CD8-positive, alpha-beta T cell (primary cell): ENCODE measurements at regions of chr17 and their contacts with region 1.

Region 1: GRCh38 chr17:8916466-8916865 is 49.0 kb upstream of the PIK3R6 start:
- DNase-seq: no peak
- ATAC-seq: no peak
- H3K4me3 ChIP-seq: no peak overlapping the region
- H3K4me3 Mint-ChIP-seq: no peak overlapping the region
- H3K27ac ChIP-seq: peak overlapping the region in 1 of 2 experiments; percentile 59
- H3K27ac Mint-ChIP-seq: peak overlapping the region; percentile 84
- H3K4me1 ChIP-seq: peaks cover 16% of the 10 kb centered on the region
- H3K4me1 Mint-ChIP-seq: peaks cover 57% of the 10 kb centered on the region
- H3K27me3 ChIP-seq: no peaks in the 10 kb centered on the region
- H3K27me3 Mint-ChIP-seq: no peaks in the 10 kb centered on the region
- CTCF ChIP-seq: no peak

Region 2: GRCh38 chr17:7348478-7349242 is 1567.8 kb before region 1 on chr17:
- CTCF ChIA-PET with region 1: no interaction called
- POLR2A ChIA-PET with region 1: no interaction called
- intact Hi-C with region 1: no loop called
- DNase-seq: no peak
- ATAC-seq: no peak
- H3K4me3 ChIP-seq: no peak overlapping the region
- H3K4me3 Mint-ChIP-seq: no peak overlapping the region
- H3K27ac ChIP-seq: no peak overlapping the region
- H3K27ac Mint-ChIP-seq: peak overlapping the region; percentile 77
- H3K4me1 ChIP-seq: peaks cover 34% of the 10 kb centered on the region
- H3K4me1 Mint-ChIP-seq: peaks cover 38% of the 10 kb centered on the region
- H3K27me3 ChIP-seq: no peaks in the 10 kb centered on the region
- H3K27me3 Mint-ChIP-seq: no peaks in the 10 kb centered on the region
- CTCF ChIP-seq: no peak

Region 3: GRCh38 chr17:8935191-8935590 is 18.7 kb after region 1 on chr17:
- CTCF ChIA-PET with region 1: no interaction called
- POLR2A ChIA-PET with region 1: interaction called, 3 read pairs
- intact Hi-C with region 1: loop called in 1 of 2 experiments (anchors 2 kb)
- DNase-seq: peak in 5 of 9 experiments; percentile 52 to 92 (median 72)
- ATAC-seq: peak; percentile 64
- H3K4me3 ChIP-seq: no peak overlapping the region
- H3K4me3 Mint-ChIP-seq: peak overlapping the region; percentile 4
- H3K27ac ChIP-seq: peak overlapping the region in 1 of 2 experiments; percentile 81
- H3K27ac Mint-ChIP-seq: peak overlapping the region; percentile 88
- H3K4me1 ChIP-seq: peaks cover 42% of the 10 kb centered on the region
- H3K4me1 Mint-ChIP-seq: peaks cover 75% of the 10 kb centered on the region
- H3K27me3 ChIP-seq: no peaks in the 10 kb centered on the region
- H3K27me3 Mint-ChIP-seq: no peaks in the 10 kb centered on the region
- CTCF ChIP-seq: no peak

Region 4: GRCh38 chr17:8949061-8949661 is 32.7 kb after region 1 on chr17:
- CTCF ChIA-PET with region 1: no interaction called
- POLR2A ChIA-PET with region 1: no interaction called
- intact Hi-C with region 1: no loop called
- DNase-seq: peak in 2 of 9 experiments; percentile 17 to 39
- ATAC-seq: peak; percentile 16
- H3K4me3 ChIP-seq: no peak overlapping the region
- H3K4me3 Mint-ChIP-seq: peak overlapping the region; percentile 61
- H3K27ac ChIP-seq: peak overlapping the region in 1 of 2 experiments; percentile 63
- H3K27ac Mint-ChIP-seq: peak overlapping the region; percentile 88
- H3K4me1 ChIP-seq: peaks cover 87% of the 10 kb centered on the region
- H3K4me1 Mint-ChIP-seq: peaks cover 95% of the 10 kb centered on the region
- H3K27me3 ChIP-seq: no peaks in the 10 kb centered on the region
- H3K27me3 Mint-ChIP-seq: no peaks in the 10 kb centered on the region
- CTCF ChIP-seq: no peak

Region 5: DNA sequence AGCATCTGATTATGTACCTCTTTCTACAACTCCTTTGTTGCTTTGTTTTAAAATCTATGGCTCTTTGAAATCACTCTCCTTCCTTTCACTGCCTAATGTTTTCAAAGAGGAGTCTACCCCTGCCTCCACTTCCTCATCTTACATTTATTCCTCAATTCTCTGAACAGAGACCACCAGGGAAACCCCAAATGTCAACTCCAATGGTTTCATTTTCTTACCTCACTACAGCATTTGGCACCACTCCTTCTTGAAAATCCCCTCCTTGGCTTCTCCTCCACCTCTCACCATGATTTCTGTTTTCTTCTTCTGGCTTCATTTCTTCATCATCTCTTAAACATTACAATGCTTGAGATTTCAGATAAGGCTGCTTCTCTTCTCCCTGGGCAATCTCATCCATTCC is 51.4 kb after region 1 on chr17:
- CTCF ChIA-PET with region 1: no interaction called
- POLR2A ChIA-PET with region 1: no interaction called
- intact Hi-C with region 1: no loop called
- DNase-seq: no peak
- ATAC-seq: no peak
- H3K4me3 ChIP-seq: no peak overlapping the region
- H3K4me3 Mint-ChIP-seq: peak overlapping the region; percentile 0
- H3K27ac ChIP-seq: no peak overlapping the region
- H3K27ac Mint-ChIP-seq: no peak overlapping the region
- H3K4me1 ChIP-seq: peaks cover 17% of the 10 kb centered on the region
- H3K4me1 Mint-ChIP-seq: peaks cover 26% of the 10 kb centered on the region
- H3K27me3 ChIP-seq: no peaks in the 10 kb centered on the region
- H3K27me3 Mint-ChIP-seq: no peaks in the 10 kb centered on the region
- CTCF ChIP-seq: no peak